ENCODE measurements at regions of chr1 and their contacts with region 1.

Region 1: DNA sequence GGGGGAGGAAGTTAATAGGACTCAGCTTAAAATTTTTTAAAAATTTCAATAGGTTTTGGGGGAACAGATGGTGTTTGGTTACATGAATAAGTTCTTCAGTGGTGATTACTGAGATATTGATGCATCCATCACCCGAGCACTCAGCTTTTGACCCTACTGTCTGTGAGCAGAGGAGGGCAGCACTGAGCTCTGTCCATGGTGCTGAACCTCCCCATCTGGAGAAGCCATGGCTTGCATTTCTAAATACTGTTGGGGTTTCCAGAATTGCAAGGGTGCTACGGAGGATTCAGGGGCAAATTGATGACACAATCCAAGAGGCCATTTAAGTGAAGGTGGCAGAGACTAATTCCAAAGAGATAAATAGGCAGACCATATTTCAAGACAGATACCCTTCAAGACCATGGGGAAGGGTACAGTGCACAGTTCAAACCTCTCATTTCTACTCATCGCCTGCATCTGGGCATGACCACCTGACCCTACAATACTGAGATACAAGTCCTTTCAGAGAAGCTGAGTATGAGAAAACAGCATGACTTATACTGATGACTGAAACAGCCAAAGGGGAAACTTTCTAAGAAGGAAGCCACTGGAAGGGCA is 17.2 kb downstream of the SYT2 start:
- DNase-seq: peak; percentile 82 to 91 (median 87)
- ATAC-seq: peak; percentile 96
- H3K4me3 ChIP-seq: no peak overlapping the region
- H3K27ac ChIP-seq: no peak overlapping the region
- H3K4me1 ChIP-seq: no peaks in the 10 kb centered on the region
- H3K27me3 ChIP-seq: peaks cover 7 to 34% of the 10 kb centered on the region in 2 experiments; a peak in 4 of 5 replicates
- CTCF ChIP-seq: peak in 2 of 3 experiments; percentile 41 to 48; a peak in 4 of 6 replicates
- EP300 ChIP-seq: no peak
- POLR2A ChIP-seq: no peak
- RAD21 ChIP-seq: no peak; a peak in 1 of 4 replicates

Region 2: DNA sequence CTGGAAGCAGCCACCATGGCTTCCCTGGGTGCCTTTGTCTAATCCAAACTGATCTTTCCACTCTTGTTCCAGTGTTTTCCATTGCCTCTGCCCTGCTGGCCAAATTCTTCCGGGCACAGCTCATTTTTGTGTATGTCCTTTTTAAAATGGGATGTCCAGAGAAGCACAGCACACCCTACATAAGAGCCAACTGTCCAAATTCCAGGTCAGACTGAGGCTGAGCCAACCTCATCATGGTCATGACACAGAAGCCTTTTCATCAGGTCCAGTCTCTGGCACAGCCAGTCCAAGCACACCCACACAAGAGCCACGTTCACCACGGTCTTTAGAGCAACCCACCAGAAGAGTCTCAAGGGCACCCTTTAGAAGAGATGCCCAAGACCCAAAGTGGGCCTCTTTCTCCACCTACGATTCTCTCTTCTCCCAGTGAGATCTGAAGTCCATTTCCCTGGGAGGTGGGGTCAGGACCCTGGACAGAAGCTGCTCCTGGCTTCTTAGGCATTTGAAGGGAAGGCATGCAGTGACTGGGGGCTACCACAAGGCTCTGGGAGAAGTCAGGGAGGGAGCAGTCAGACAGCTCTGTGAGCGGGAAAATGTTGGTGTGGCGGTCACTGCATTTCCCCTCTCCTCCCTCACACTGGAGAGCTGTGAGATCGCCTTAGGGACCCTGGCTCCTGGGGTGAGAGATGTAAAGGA is 36.0 kb before region 1 on chr1:
- CTCF ChIA-PET with region 1: no interaction called
- POLR2A ChIA-PET with region 1: no interaction called
- in situ Hi-C with region 1: no loop called
- intact Hi-C with region 1: loop called (anchors 5 kb)
- DNase-seq: peak; percentile 58 to 80 (median 70)
- ATAC-seq: peak; percentile 83
- H3K4me3 ChIP-seq: no peak overlapping the region
- H3K27ac ChIP-seq: no peak overlapping the region
- H3K4me1 ChIP-seq: no peaks in the 10 kb centered on the region
- H3K27me3 ChIP-seq: peaks cover 27 to 81% of the 10 kb centered on the region in 2 experiments
- CTCF ChIP-seq: peak; percentile 29 to 49 (median 31); a peak in 4 of 6 replicates
- EP300 ChIP-seq: no peak
- POLR2A ChIP-seq: no peak
- RAD21 ChIP-seq: no peak

Region 3: DNA sequence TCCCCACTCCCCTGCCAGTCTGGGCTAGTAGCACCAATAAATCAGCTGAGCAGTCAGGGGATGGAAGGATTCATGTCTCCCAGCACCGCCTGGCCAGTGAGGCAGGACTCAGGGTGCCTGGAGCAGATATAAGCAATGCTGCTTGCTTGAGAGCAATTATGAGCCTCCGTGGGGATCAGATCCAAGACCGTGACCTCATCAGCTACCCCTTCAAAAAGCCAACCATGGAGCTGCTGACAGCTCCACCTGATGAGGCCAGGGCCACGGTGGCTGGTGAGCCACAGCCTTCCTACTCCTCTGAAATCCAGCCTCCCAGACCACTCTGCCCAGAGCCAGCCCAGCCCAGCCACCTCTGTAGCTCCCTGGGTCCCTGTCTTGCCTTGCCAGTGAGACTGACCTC is 11.3 kb before region 1 on chr1:
- CTCF ChIA-PET with region 1: no interaction called
- POLR2A ChIA-PET with region 1: interaction called, 11 read pairs
- in situ Hi-C with region 1: no loop called
- intact Hi-C with region 1: no loop called
- DNase-seq: no peak
- ATAC-seq: no peak
- H3K4me3 ChIP-seq: no peak overlapping the region
- H3K27ac ChIP-seq: no peak overlapping the region
- H3K4me1 ChIP-seq: no peaks in the 10 kb centered on the region
- H3K27me3 ChIP-seq: peaks cover 24 to 57% of the 10 kb centered on the region in 2 experiments
- CTCF ChIP-seq: no peak
- EP300 ChIP-seq: no peak
- POLR2A ChIP-seq: no peak
- RAD21 ChIP-seq: no peak

Region 4: GRCh38 chr1:203776636-203777035 is 1083.6 kb after region 1 on chr1:
- CTCF ChIA-PET with region 1: no interaction called
- POLR2A ChIA-PET with region 1: no interaction called
- in situ Hi-C with region 1: no loop called
- intact Hi-C with region 1: no loop called
- DNase-seq: peak in 3 of 4 experiments; percentile 38 to 43 (median 39)
- ATAC-seq: peak; percentile 82
- H3K4me3 ChIP-seq: no peak overlapping the region
- H3K27ac ChIP-seq: no peak overlapping the region
- H3K4me1 ChIP-seq: no peaks in the 10 kb centered on the region; a peak in 2 of 5 replicates
- H3K27me3 ChIP-seq: peaks cover 15 to 20% of the 10 kb centered on the region in 2 experiments
- CTCF ChIP-seq: peak; percentile 38 to 61 (median 52); a peak in 4 of 6 replicates
- EP300 ChIP-seq: no peak
- POLR2A ChIP-seq: no peak
- RAD21 ChIP-seq: peak; percentile 61 to 65